ENCODE measurements at regions of chr3 and their contacts with region 1.

Region 1: DNA sequence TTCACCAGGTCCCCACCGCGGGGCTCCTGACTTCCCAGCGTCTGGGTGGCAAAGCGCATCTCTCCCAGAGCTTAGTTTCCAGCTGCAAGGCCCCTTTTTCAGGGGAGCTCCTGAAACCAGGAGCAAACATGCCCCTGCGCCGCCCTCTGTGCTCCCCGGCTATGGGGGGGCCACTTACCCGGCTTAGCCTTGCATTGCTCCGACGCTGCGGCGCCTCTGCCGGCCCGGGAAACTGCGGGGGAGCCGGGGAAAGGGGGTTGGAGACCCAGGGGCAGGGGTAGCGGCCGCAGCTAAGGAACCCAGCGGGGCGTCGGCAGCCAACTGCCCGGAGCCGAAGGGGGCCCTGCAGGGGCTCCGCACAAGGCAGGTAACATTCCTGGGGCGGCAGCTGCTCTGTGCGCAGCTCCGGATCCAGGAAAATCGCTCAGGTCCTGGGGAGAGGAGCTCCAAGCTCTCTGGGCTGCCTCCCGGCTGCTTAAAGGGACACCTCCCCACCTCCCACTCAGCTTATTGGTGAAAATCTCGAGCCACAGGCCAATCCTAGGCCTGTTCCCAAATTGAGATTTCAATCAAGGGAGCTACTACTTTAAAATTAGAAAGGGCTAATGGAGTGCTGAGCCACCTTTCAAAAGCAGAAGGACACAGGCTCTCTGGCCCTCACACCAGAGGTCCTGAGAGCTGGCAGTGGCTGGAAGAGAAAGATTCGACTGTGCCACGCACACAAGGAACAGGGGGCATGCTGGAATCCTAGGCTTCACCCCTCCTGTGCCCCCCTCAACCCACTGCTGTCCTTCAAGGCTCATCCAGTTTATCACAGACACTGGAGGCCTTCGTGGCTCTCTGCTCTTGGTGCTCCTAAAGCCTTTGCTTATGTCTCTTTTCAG is 42.7 kb upstream of the PRICKLE2 start:
- DNase-seq: peak; percentile 76 to 88 (median 84)
- ATAC-seq: peak; percentile 92
- H3K4me3 ChIP-seq: peak overlapping the region; percentile 95
- H3K27ac ChIP-seq: peak overlapping the region; percentile 63
- H3K4me1 ChIP-seq: peaks cover 5% of the 10 kb centered on the region
- H3K27me3 ChIP-seq: no peaks in the 10 kb centered on the region

Region 2: DNA sequence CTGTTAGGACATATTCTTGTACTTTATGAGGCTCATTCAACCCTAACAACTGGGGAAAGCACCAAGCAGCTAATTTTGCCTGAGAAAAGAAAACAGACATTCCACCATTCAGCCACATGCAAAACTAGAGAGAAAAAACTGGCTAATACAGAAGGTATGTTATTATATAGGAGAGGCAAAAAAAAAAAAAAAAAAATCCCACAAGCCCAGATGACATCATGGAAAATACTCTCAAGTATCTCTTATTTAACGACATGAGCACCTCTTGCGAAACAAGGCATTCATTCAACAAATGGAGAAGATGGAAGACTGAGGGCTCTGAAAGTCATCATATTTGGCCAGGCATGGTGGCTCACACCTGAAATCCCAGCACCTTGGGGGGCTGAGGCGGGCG is 104.2 kb before region 1 on chr3:
- intact Hi-C with region 1: loop called in 1 of 4 experiments (anchors 10 kb)
- DNase-seq: no peak
- ATAC-seq: no peak
- H3K4me3 ChIP-seq: no peak overlapping the region
- H3K27ac ChIP-seq: no peak overlapping the region
- H3K4me1 ChIP-seq: peaks cover 3% of the 10 kb centered on the region
- H3K27me3 ChIP-seq: no peaks in the 10 kb centered on the region

Region 3: DNA sequence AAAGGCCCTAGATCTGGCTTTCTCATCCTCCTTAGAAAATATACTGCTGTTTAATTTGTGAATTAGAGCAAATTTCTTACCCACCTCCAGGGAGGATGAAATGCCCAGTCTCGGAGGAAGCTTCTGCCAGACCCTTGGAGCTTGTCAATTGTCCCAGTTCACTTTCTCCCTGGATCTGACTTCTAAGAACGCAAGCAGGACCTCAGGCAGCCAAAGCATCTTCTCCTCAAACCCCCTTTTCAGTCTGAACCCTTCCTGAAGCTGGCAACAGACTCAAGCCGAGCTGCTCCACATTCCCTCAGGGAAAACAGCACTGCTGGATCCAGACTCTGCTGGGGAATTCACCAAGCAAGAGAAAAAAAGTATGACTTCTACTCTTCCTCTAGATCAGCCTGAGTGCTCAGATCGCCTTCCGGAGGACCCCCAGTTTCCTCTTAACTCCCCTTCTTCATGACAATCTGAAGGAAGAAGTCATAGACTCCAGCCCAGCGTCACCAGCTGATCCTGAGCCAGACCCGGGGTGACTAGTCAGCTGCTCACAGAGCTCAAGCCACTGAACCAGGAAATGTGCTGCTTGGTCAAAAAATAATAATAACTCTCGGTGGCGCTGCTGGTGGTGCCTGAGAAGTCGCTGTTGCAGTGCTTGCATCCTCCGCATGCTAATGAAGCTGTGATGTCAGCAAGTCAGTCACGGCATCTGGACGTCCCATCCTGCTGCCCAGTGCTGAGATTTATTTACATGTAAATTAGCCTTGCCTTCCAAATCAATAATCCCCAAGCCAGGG is 42.9 kb before region 1 on chr3 and contains the start of gene PRICKLE2:
- intact Hi-C with region 1: loop called in 1 of 4 experiments (anchors 5 kb)
- DNase-seq: peak; percentile 85 to 90 (median 90)
- ATAC-seq: peak; percentile 74 to 90
- H3K4me3 ChIP-seq: peak within 1 kb of the TSS; percentile 23
- H3K27ac ChIP-seq: peak within 1 kb of the TSS; percentile 63
- H3K4me1 ChIP-seq: peaks cover 17% of the 10 kb centered on the region
- H3K27me3 ChIP-seq: no peaks in the 10 kb centered on the region
- total RNA-seq, gene PRICKLE2: 10.6 to 15.2 (median 11.8) TPM

Measured in right cardiac atrium (tissue), 5 donors.